ENCODE measurements at regions of chr11 and their contacts with region 1.

Region 1: GRCh38 chr11:57249384-57250319 is 12.6 kb upstream of the APLNR start:
- DNase-seq: peak in 21 of 35 experiments; percentile 3 to 54 (median 20)
- ATAC-seq: no peak
- H3K4me3 ChIP-seq: no peak overlapping the region
- H3K4me3 Mint-ChIP-seq: no peak overlapping the region
- H3K27ac ChIP-seq: no peak overlapping the region
- H3K27ac Mint-ChIP-seq: no peak overlapping the region
- H3K4me1 ChIP-seq: peaks cover 0 to 5% of the 10 kb centered on the region in 2 experiments
- H3K4me1 Mint-ChIP-seq: peaks cover 6 to 9% (median 8%) of the 10 kb centered on the region in 3 donors
- H3K27me3 ChIP-seq: peaks cover 0 to 9% of the 10 kb centered on the region in 2 experiments
- H3K27me3 Mint-ChIP-seq: peaks cover 31 to 34% of the 10 kb centered on the region in 2 donors

Region 2: DNA sequence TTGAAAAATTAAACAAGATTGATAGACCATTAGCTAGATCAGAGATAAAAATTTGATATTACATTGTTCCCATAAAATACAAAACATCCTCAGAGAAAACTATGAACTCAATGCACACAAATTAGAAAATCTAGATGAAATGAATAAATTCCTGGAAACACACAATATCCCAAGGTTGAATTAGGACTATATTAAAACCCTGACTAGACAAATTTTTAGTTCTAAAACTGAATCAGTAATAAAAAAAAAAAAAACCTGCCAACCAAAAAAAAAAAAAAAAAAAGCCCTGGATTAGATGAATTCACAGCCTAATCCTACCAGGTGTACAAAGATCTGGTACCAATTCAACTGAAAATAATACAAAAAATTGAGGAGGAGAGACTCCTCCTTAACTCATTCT is 909.4 kb before region 1 on chr11:
- CTCF ChIA-PET with region 1: interaction called in 1 of 2 experiments, 12 read pairs
- POLR2A ChIA-PET with region 1: no interaction called
- DNase-seq: no peak
- ATAC-seq: no peak
- H3K4me3 ChIP-seq: no peak overlapping the region
- H3K4me3 Mint-ChIP-seq: no peak overlapping the region
- H3K27ac ChIP-seq: no peak overlapping the region
- H3K27ac Mint-ChIP-seq: no peak overlapping the region
- H3K4me1 ChIP-seq: no peaks in the 10 kb centered on the region
- H3K4me1 Mint-ChIP-seq: no peaks in the 10 kb centered on the region
- H3K27me3 ChIP-seq: no peaks in the 10 kb centered on the region
- H3K27me3 Mint-ChIP-seq: no peaks in the 10 kb centered on the region

Region 3: DNA sequence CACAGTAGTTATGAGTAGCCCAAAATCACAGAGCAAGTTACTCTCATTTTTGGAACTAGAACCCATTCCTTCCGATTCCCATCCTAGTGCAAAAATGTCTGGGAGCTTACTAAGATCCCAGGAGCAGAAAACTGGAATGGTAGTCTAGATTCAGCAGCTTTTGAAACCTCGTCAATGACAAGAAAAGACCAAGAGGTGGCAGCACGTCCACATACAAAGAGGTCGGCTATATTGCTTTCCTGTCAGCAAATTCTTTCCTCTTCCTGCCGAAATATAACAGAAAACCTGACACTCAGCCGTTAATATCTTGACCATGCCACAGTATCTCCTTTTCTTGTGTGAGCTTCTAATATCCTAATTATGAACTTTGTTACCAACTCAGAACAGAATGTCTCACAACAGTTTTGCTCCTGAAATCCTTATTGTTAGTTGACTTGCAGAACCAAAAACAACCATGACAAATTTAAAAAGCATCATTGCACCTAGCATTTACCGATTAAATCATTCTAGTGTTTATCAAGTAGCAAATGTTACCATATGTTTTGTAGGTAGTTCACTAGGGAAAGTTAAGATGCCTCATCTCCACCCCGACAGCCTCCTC is 408.3 kb before region 1 on chr11:
- CTCF ChIA-PET with region 1: interaction called, 8 to 13 read pairs
- POLR2A ChIA-PET with region 1: no interaction called
- DNase-seq: peak in 4 of 35 experiments; percentile 2 to 39 (median 2)
- ATAC-seq: no peak
- H3K4me3 ChIP-seq: no peak overlapping the region
- H3K4me3 Mint-ChIP-seq: no peak overlapping the region
- H3K27ac ChIP-seq: no peak overlapping the region
- H3K27ac Mint-ChIP-seq: no peak overlapping the region
- H3K4me1 ChIP-seq: no peaks in the 10 kb centered on the region
- H3K4me1 Mint-ChIP-seq: no peaks in the 10 kb centered on the region
- H3K27me3 ChIP-seq: no peaks in the 10 kb centered on the region
- H3K27me3 Mint-ChIP-seq: peaks cover 0 to 4% of the 10 kb centered on the region in 2 donors

Region 4: DNA sequence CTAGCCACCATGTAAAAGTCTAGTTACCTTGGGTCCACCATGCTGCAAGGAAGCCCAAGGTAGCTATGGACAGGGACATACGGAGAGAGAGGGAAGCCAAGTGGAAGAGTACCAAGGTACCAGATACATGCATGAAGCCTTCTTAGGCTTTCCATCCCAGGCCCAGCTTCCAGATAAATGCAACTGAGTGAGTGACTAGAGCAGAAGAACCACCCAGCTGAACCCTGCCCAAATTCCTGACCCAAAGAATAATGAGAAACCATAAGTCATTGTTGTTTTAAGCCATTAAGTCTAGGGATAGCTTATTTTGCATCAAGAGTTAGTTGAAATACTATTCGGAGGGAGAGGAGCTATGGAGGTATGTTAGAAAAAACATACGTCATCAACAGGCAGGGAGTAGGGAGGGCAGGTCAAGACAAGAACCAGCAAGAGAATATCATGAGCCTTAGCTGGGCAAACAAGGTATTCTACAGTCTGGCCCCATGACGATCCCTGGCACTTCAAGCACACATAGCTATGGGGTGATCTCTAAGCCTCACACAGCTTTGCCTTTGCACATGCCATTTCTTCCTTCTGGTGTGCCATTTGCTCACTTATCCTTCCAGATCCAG is 23.9 kb after region 1 on chr11:
- CTCF ChIA-PET with region 1: no interaction called
- POLR2A ChIA-PET with region 1: no interaction called
- DNase-seq: no peak
- ATAC-seq: no peak
- H3K4me3 ChIP-seq: no peak overlapping the region
- H3K4me3 Mint-ChIP-seq: no peak overlapping the region
- H3K27ac ChIP-seq: no peak overlapping the region
- H3K27ac Mint-ChIP-seq: no peak overlapping the region
- H3K4me1 ChIP-seq: no peaks in the 10 kb centered on the region
- H3K4me1 Mint-ChIP-seq: peaks cover 2 to 7% (median 4%) of the 10 kb centered on the region in 3 donors
- H3K27me3 ChIP-seq: peaks cover 4 to 19% of the 10 kb centered on the region in 2 experiments
- H3K27me3 Mint-ChIP-seq: peaks cover 24 to 36% of the 10 kb centered on the region in 2 donors

Region 5: GRCh38 chr11:57406337-57406904 is 156.8 kb after region 1 on chr11:
- CTCF ChIA-PET with region 1: no interaction called
- POLR2A ChIA-PET with region 1: no interaction called
- DNase-seq: no peak
- ATAC-seq: no peak
- H3K4me3 ChIP-seq: no peak overlapping the region
- H3K4me3 Mint-ChIP-seq: no peak overlapping the region
- H3K27ac ChIP-seq: no peak overlapping the region
- H3K27ac Mint-ChIP-seq: peak overlapping the region in 1 of 2 donors; percentile 39
- H3K4me1 ChIP-seq: peaks cover 0 to 3% of the 10 kb centered on the region in 2 experiments
- H3K4me1 Mint-ChIP-seq: peaks cover 0 to 10% (median 10%) of the 10 kb centered on the region in 3 donors
- H3K27me3 ChIP-seq: no peaks in the 10 kb centered on the region
- H3K27me3 Mint-ChIP-seq: no peaks in the 10 kb centered on the region